ENCODE measurements at regions of chr1 and their contacts with region 1.

Region 1: DNA sequence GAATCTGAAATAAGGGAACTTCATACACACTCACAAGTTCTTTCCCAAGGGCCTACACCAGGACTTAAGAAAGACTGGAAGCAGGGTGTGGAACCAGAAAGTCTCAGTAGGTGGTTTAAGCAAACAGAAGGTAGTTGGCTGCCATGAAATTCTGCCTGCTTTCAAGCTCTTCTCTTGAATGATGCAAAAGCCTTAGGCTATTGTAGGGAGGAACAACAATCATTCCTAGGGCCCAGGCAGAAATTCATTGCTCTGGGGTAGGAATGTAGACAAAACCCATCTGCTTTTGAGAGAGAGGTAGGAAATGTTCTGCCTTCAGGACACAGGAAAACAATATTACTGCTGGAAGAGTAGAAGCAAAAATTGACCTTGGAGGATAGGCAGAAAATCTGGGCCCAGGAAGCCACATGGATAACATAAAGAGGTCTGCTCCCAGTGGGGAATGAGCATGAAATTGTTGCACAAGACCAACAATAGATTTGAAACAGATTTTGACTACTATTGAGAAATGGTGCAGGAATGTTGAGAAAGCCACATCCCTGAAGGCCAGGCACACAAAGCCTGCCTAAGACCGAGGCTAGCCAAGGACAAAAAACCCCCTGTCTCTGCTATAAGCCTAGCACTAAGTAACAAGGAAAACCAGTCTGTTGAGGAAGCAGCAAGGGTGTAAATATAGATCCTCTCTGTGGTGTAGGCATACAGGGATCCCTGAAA is 22.7 kb upstream of the SFT2D2 start:
- DNase-seq: no peak
- ATAC-seq: no peak
- H3K4me3 Mint-ChIP-seq: no peak overlapping the region
- H3K27ac Mint-ChIP-seq: no peak overlapping the region
- H3K4me1 Mint-ChIP-seq: no peaks in the 10 kb centered on the region
- H3K27me3 Mint-ChIP-seq: no peaks in the 10 kb centered on the region
- CTCF ChIP-seq: no peak

Region 2: GRCh38 chr1:168234846-168235547 is 31.9 kb after region 1 on chr1:
- CTCF ChIA-PET with region 1: no interaction called
- POLR2A ChIA-PET with region 1: no interaction called
- intact Hi-C with region 1: loop called (anchors 2 kb)
- DNase-seq: no peak
- ATAC-seq: peak; percentile 92
- H3K4me3 Mint-ChIP-seq: no peak overlapping the region
- H3K27ac Mint-ChIP-seq: no peak overlapping the region
- H3K4me1 Mint-ChIP-seq: peaks cover 38% of the 10 kb centered on the region
- H3K27me3 Mint-ChIP-seq: no peaks in the 10 kb centered on the region
- CTCF ChIP-seq: no peak